ENCODE measurements at regions of chr20 and their contacts with region 1.

Region 1: GRCh38 chr20:5835321-5835821 is 85.2 kb downstream of the SHLD1 start:
- DNase-seq: peak in 5 of 10 donors; percentile 4 to 25 (median 6)
- ATAC-seq: peak; percentile 56 to 63
- H3K4me3 Mint-ChIP-seq: peak overlapping the region in 9 of 10 donors; percentile 29 to 82 (median 61)
- H3K27ac Mint-ChIP-seq: peak overlapping the region; percentile 88 to 99 (median 97)
- H3K4me1 Mint-ChIP-seq: peaks cover 17 to 25% (median 24%) of the 10 kb centered on the region in 4 donors
- H3K27me3 Mint-ChIP-seq: peaks cover 0 to 1% (median 0%) of the 10 kb centered on the region in 5 donors

Region 2: GRCh38 chr20:5806457-5807263 is 28.7 kb before region 1 on chr20:
- POLR2A ChIA-PET with region 1: interaction called, 13 read pairs
- DNase-seq: no peak
- ATAC-seq: no peak
- H3K4me3 Mint-ChIP-seq: no peak overlapping the region
- H3K27ac Mint-ChIP-seq: peak overlapping the region in 4 of 10 donors; percentile 66 to 87 (median 81)
- H3K4me1 Mint-ChIP-seq: peaks cover 18 to 38% (median 27%) of the 10 kb centered on the region in 4 donors
- H3K27me3 Mint-ChIP-seq: no peaks in the 10 kb centered on the region

Measured in naive thymus-derived CD8-positive, alpha-beta T cell (primary cell).